ENCODE measurements at regions of chr5 and their contacts with region 1.

Region 1: DNA sequence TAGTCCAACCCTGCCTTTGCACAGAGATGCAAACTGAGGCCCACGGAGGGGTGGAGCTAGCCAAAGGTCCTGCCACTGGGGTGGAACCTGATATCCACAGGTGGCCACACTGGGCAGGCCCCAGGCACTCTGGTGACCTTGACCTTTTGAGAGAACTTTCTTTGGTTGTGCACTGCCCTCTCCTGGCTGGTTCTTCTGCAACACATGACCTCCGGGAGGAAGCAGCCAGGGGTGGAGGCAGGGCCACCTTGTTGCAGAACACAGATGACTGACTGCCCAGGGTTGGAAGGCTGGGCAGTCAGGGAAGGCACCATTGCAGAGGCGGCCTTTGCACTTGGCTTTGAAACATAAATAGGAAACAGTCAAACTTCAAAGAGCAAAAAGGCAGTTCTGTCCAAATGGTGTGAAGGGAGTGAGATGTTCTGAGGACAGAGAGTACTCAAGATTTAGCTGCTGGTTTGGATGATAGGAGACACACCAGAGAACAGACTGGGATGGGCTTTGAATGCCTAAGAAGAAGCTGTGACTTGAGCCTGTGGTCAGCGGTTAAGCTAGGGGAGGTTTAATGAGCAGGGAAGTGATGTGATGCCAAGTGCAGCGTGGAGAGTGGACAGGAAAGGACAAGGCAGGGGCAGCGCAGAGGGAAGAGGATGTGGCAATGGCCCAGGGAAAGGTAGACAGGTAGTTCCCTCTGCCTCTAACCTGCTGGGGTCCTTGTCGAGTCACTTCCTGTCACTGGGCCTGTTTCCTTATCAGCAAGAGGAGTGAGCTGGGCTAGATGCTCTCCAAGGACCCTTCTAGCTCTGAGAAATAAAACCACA is 6.8 kb upstream of the TCOF1 start:
- DNase-seq: peak; percentile 12
- H3K4me3 ChIP-seq: no peak overlapping the region
- H3K27me3 ChIP-seq: no peaks in the 10 kb centered on the region
- CTCF ChIP-seq: peak; percentile 73

Region 2: DNA sequence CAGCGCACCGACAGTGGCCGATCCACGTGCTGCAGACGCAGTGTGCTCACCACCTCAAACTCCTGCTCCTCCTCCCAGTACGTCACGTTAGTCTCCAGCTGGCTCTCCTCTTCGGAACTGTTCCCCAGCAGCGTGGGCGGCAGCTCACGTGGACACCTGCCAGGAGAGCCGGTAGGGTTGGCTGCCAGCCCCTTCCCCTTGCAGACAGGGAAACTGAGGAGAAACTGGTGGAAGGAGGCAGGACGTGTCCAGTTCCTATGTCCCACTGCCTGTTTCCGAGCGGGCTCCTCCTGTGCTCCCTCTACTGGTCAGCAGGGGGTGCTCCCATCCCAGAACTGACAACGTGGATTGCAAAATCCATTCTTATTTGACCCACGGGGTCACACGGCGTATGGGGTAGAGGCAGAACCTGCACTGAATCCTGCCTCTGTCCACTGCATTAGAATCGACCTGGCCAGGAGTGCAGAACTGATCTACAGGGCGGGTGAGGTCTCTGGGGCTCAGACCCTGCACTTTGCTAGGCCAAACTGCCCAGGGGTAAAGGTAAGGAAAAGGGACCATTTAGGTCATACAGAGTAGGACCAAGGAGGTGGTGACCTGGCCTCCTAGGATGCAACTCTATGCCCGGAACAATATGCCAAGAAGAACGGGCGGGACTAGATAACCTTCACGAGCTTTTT is 220.8 kb before region 1 on chr5:
- CTCF ChIA-PET with region 1: no interaction called
- POLR2A ChIA-PET with region 1: no interaction called
- DNase-seq: no peak
- H3K4me3 ChIP-seq: no peak overlapping the region
- H3K27me3 ChIP-seq: no peaks in the 10 kb centered on the region
- CTCF ChIP-seq: peak; percentile 94

Region 3: GRCh38 chr5:150161242-150162141 is 189.2 kb before region 1 on chr5:
- CTCF ChIA-PET with region 1: interaction called, 19 read pairs
- POLR2A ChIA-PET with region 1: no interaction called
- DNase-seq: no peak
- H3K4me3 ChIP-seq: no peak overlapping the region
- H3K27me3 ChIP-seq: no peaks in the 10 kb centered on the region
- CTCF ChIP-seq: peak; percentile 99

Region 4: DNA sequence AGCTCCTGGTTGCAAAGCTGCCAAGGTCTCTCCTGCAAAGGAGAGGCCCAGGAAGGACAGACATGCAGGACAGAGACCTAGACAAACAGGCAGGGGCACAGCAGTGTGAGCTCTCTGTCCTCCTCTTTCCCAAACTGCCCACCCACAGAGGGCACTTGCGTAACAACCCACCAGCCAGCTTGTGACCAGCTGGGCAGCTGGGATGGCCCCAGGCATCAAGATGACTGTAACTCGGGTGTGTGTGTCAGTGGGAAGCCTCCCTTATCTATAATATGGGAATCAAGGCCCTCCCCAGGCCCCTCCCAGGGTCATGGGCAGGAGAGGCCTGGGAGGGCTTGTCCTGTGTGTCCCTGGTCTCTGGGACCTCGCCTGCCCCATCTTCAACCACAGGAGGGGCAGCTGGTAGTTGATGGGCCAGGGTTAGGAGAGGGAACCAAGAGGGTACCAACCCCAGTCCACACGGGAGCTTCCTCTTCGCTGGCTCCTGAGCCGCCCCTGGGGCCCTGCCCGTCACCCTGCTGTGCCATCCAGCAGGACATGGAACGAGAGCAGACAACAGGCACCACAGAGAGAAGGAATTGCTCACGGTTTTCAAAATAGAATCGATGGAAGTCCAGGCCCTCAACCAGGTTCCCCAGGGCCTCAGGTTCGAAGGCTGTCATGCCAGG is 123.0 kb before region 1 on chr5:
- CTCF ChIA-PET with region 1: interaction called, 13 read pairs
- POLR2A ChIA-PET with region 1: no interaction called
- DNase-seq: no peak
- H3K4me3 ChIP-seq: no peak overlapping the region
- H3K27me3 ChIP-seq: no peaks in the 10 kb centered on the region
- CTCF ChIP-seq: no peak

Region 5: GRCh38 chr5:150272526-150272925 is 78.2 kb before region 1 on chr5:
- CTCF ChIA-PET with region 1: interaction called, 122 read pairs
- POLR2A ChIA-PET with region 1: no interaction called
- DNase-seq: no peak
- H3K4me3 ChIP-seq: no peak overlapping the region
- H3K27me3 ChIP-seq: no peaks in the 10 kb centered on the region; the same call in 1 of the 2 replicates
- CTCF ChIP-seq: peak; percentile 60

Region 6: DNA sequence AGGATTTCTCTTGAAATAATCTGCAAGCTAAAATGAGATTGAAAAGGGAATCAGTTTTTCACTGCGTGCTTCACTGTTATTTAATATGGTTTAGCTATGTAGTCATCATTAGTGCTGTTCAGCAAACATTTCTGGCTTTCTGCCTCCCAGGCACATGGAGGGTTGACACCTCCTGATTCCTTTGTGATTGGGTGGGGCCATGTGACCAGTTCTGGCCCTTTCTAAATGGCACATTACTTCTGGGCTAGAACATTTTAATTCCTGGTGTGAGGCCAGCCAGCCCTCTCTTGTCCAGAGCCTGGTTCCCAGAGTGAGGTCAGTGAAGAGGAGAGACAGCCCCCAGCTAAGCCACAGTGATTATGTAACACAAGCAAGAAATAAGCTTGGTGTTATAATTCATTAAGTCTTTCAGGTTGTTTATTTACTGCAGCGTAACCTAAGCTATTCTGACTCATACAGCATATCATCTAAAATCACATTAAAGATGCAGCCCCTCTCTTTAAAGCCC is 30.6 kb before region 1 on chr5:
- CTCF ChIA-PET with region 1: interaction called, 14 read pairs
- POLR2A ChIA-PET with region 1: no interaction called
- DNase-seq: peak; percentile 89
- H3K4me3 ChIP-seq: no peak overlapping the region
- H3K27me3 ChIP-seq: no peaks in the 10 kb centered on the region
- CTCF ChIP-seq: no peak

Region 7: DNA sequence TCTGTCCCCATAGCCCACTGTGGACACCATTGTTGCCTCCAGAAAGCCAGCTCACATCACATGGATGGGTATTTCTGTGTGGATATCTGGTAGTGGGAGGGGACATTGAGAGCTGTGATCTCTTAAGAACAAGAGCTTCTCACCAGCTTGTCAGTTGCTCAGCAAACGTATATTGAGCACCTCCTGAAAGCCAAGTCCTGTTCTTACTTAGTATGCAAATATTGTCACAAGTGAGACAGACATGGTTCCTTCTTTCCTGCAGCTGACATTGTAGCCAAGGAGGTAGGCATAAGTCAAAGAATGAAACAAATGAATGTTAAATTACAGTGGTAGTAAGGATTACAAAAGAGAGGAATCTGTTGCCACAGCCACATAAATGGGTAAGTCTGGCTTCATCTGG is 10.6 kb after region 1 on chr5:
- CTCF ChIA-PET with region 1: interaction called, 16 read pairs
- POLR2A ChIA-PET with region 1: no interaction called
- DNase-seq: no peak
- H3K4me3 ChIP-seq: no peak overlapping the region
- H3K27me3 ChIP-seq: no peaks in the 10 kb centered on the region
- CTCF ChIP-seq: no peak

Region 8: GRCh38 chr5:150436141-150436680 is 85.5 kb after region 1 on chr5:
- CTCF ChIA-PET with region 1: interaction called, 25 read pairs
- POLR2A ChIA-PET with region 1: no interaction called
- DNase-seq: peak; percentile 27
- H3K4me3 ChIP-seq: no peak overlapping the region
- H3K27me3 ChIP-seq: no peaks in the 10 kb centered on the region
- CTCF ChIP-seq: peak; percentile 80

Measured in BJ (cell line).